HCT116 (cell line): ENCODE measurements at regions of chr19 and their contacts with region 1.

Region 1: GRCh38 chr19:18675779-18676178 is 7.7 kb upstream of the CRTC1 start:
- DNase-seq: peak; percentile 10
- ATAC-seq: no peak
- H3K4me3 ChIP-seq: no peak overlapping the region
- H3K27ac ChIP-seq: no peak overlapping the region
- H3K4me1 ChIP-seq: peaks cover 18 to 29% of the 10 kb centered on the region in 2 experiments
- H3K27me3 ChIP-seq: no peaks in the 10 kb centered on the region
- CTCF ChIP-seq: peak in 2 of 3 experiments; percentile 60 to 72; a peak in 5 of 6 replicates
- POLR2A ChIP-seq: no peak
- RAD21 ChIP-seq: peak; percentile 83

Region 2: GRCh38 chr19:18450931-18451845 is 224.6 kb before region 1 on chr19:
- CTCF ChIA-PET with region 1: no interaction called
- POLR2A ChIA-PET with region 1: no interaction called
- RAD21 ChIA-PET with region 1: no interaction called
- intact Hi-C with region 1: loop called (anchors 5 kb)
- DNase-seq: no peak
- ATAC-seq: peak; percentile 91
- H3K4me3 ChIP-seq: no peak overlapping the region
- H3K27ac ChIP-seq: no peak overlapping the region; the same call in 1 of the 2 replicates
- H3K4me1 ChIP-seq: peaks cover 3 to 8% of the 10 kb centered on the region in 2 experiments; a peak in 3 of 4 replicates
- H3K27me3 ChIP-seq: no peaks in the 10 kb centered on the region
- CTCF ChIP-seq: peak; percentile 74 to 97 (median 96)
- POLR2A ChIP-seq: no peak
- RAD21 ChIP-seq: peak; percentile 88

Region 3: DNA sequence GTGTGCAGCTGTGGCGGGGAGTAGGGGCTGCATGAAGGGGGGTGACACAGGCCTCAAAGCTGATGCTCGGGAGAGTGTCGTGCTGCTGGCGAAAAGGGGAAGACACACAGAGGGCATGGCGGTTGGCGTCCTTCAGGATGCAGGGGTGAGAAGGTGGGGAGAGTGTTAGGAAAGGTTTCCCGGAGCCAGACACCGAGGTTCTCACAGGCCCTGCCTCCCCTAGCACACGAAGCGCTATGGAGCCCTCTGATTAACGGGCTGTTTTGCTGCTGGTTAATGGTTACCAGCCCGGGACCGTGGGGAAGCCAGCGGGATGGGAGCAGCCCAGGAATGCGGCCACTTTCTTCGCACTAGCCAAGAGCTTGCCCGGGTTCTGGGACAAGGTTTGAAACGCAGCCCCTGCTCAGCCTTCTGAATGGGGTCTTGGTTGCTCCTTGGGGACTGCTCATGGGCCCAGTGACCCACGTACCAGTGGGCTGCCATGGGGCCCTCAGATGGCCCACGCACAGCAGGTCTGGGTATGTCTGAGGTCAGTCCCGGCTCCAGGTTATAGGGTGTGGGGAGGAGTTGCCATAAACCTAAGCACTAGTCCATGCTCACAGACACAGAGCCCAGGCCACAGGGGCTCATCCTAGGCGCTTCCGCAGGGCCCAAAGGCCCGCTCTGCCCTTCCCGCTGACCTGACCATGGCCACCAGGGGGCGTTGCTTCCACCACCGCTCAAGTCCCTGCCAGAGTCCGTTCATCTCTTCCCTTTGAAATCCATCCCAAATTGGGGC is 206.5 kb before region 1 on chr19:
- CTCF ChIA-PET with region 1: no interaction called
- POLR2A ChIA-PET with region 1: no interaction called
- RAD21 ChIA-PET with region 1: no interaction called
- intact Hi-C with region 1: loop called (anchors 5 kb)
- DNase-seq: peak; percentile 32
- ATAC-seq: peak; percentile 76
- H3K4me3 ChIP-seq: no peak overlapping the region
- H3K27ac ChIP-seq: peak overlapping the region; percentile 37; the same call in 1 of the 2 replicates
- H3K4me1 ChIP-seq: peaks cover 13 to 32% of the 10 kb centered on the region in 2 experiments
- H3K27me3 ChIP-seq: no peaks in the 10 kb centered on the region
- CTCF ChIP-seq: peak; percentile 57 to 92 (median 91)
- POLR2A ChIP-seq: no peak
- RAD21 ChIP-seq: peak; percentile 53

Region 4: GRCh38 chr19:18596752-18597157 is 79.0 kb before region 1 on chr19:
- CTCF ChIA-PET with region 1: interaction called, 7 read pairs
- POLR2A ChIA-PET with region 1: no interaction called
- RAD21 ChIA-PET with region 1: interaction called in 1 of 2 experiments, 4 read pairs
- intact Hi-C with region 1: loop called (anchors 2 kb)
- DNase-seq: peak; percentile 10
- ATAC-seq: peak; percentile 70
- H3K4me3 ChIP-seq: no peak overlapping the region
- H3K27ac ChIP-seq: no peak overlapping the region
- H3K4me1 ChIP-seq: peaks cover 11 to 25% of the 10 kb centered on the region in 2 experiments; a peak in 3 of 4 replicates
- H3K27me3 ChIP-seq: no peaks in the 10 kb centered on the region
- CTCF ChIP-seq: no peak
- POLR2A ChIP-seq: no peak
- RAD21 ChIP-seq: no peak